ENCODE measurements at regions of chr18 and their contacts with region 1.

Region 1: DNA sequence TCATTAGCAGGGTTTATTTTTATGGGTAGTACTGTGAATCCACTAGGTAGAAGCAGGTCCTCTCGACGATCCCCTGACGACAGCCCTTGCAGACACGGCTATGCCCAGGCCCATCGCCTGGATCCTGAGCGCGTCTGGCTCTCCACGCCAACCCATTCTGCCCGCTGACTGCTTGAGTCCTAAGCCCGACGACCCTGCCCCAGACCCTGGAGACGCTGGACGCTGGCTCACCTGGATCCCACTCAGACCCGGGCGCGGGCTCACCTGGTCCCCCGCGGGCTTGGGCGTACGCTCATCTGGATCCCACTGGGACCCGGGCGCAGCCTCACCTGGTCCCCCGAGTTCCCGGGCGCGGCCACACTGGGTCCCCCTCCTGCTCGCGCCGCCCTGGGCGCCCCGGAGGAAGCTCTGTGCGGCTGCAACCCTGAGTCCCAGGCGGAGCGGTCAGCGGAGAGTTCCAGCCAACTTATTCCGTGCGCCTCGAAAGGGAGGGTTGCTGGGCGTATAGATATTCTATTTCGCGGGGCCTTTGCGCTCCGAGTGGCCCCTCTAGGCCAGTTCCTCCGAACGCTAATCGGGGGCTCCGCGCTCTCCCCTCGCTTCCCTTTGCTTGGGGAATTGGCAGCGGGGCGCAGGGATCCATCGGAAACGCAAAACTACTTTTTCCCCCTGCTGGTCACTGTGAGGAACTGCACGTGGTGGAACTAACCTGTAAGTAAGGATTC is 22.4 kb upstream of the RMP24 start:
- DNase-seq: peak; percentile 67
- H3K4me3 ChIP-seq: peak overlapping the region; percentile 85
- H3K27ac ChIP-seq: no peak overlapping the region
- H3K4me1 ChIP-seq: no peaks in the 10 kb centered on the region
- H3K27me3 ChIP-seq: no peaks in the 10 kb centered on the region

Region 2: DNA sequence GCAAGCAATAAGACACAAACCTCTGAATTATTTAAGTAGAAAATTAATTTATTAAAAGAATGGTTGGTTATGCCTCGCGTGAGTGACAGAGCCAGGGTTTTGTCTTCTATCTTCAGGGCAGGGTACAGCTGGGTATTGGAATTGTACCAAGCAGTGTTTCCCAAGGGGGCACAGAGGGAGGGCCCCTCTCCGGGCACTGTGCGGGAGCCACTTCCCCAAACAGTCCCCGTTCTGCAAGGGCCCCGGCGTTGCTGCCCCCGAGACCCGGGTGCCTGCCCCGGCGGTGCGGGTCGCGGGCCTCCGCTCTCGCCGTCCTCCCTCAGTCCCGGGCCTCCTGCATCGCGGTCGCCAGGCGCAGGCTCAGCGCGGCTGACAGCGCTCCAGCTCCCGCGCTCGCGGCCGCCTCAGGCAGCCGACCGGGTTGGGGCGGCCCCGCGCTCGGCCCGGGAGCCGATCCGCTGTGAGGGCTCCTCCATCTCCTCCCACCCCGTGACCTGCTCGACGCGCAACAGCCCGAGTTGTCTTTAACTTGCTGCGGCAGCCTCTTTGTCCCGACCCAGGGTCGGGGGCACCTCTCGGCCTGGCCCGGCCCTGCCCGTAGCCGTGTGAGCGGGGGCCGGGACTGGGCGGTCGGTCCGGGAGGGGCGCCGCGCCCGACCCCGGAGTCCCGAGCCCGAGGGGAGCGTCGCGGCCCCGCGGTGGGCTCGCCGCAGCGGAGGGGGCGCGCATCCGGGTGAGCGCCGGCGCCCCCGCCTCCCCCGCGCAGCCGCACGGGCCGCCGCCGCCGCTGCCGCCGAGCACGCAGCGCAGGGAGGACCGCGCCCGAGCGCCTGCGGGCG is 369.1 kb before region 1 on chr18:
- in situ Hi-C with region 1: no loop called
- DNase-seq: peak; percentile 82
- H3K4me3 ChIP-seq: peak overlapping the region; percentile 80
- H3K27ac ChIP-seq: peak overlapping the region; percentile 66
- H3K4me1 ChIP-seq: peaks cover 16% of the 10 kb centered on the region
- H3K27me3 ChIP-seq: no peaks in the 10 kb centered on the region

Region 3: GRCh38 chr18:35827275-35827902 is 122.7 kb before region 1 on chr18:
- in situ Hi-C with region 1: no loop called
- DNase-seq: no peak
- H3K4me3 ChIP-seq: no peak overlapping the region
- H3K27ac ChIP-seq: no peak overlapping the region
- H3K4me1 ChIP-seq: no peaks in the 10 kb centered on the region
- H3K27me3 ChIP-seq: no peaks in the 10 kb centered on the region

Region 4: GRCh38 chr18:35904389-35905037 is 45.6 kb before region 1 on chr18:
- in situ Hi-C with region 1: loop called (anchors 5 kb)
- DNase-seq: no peak
- H3K4me3 ChIP-seq: no peak overlapping the region
- H3K27ac ChIP-seq: no peak overlapping the region
- H3K4me1 ChIP-seq: no peaks in the 10 kb centered on the region
- H3K27me3 ChIP-seq: no peaks in the 10 kb centered on the region

Measured in GM23248 (cell line).